Activated T-helper 1 cell treated with anti-CD3 and anti-CD28 coated beads, Interleukin-12 subunit alpha, Interleukin-12 subunit beta, Interleukin-2, Interleukin-4 antibody, amounts not matched to agents 30 ng/mL and 10 ng/mL and 1 ng/mL, durations not matched to agents 14 hours and 24 hours and 36 hours (primary cell): ENCODE measurements at regions of chr10 and their contacts with region 1.

Region 1: DNA sequence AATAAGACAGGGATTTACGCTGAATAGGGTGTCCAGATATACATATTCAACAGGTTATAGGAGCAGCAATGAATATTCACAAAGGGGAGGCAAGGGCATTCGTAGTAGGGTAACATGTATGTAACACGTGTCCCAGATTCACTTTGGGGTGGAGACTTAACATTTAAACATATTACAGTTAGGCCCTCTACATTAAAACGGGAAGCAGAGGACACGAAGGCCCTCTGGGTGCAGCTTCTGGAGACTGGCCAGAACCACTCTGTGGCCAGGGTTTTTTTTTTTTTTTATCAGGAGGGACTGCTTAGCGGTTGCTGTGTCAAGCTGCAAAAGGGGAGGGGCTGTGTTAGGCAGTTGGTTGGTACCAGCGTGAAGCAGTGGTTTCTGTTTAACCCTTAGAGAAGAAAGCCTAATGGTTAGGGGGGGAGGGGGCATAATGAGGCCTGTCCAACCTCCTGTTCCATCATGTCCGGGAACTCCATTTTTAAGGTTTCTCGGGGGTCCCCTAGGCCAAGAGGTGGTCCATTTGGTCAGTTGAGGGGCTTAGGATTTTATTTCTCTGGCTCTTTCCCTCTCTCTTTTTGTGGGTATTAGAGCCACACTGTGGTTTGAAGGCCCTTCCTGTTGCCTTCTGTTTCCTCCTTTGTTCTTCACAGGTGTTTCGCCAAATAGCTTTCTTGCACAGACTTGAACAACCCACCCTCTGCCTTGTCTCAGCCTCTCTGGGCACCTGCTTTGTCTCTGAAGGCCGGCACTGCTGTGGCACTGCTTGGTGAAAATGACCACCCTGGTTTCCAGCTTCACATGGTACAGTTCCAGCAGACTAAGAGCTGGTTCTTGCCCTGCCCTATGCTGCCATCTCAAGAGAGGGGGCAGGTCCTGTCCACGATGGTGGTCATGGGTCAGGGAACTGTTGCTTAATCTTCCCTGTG is 26.4 kb downstream of the PRF1 start:
- DNase-seq: no peak
- H3K4me3 Mint-ChIP-seq: no peak overlapping the region
- H3K27ac Mint-ChIP-seq: peak overlapping the region; percentile 76
- H3K4me1 Mint-ChIP-seq: peaks cover 49% of the 10 kb centered on the region
- H3K27me3 Mint-ChIP-seq: peaks cover 6% of the 10 kb centered on the region

Region 2: DNA sequence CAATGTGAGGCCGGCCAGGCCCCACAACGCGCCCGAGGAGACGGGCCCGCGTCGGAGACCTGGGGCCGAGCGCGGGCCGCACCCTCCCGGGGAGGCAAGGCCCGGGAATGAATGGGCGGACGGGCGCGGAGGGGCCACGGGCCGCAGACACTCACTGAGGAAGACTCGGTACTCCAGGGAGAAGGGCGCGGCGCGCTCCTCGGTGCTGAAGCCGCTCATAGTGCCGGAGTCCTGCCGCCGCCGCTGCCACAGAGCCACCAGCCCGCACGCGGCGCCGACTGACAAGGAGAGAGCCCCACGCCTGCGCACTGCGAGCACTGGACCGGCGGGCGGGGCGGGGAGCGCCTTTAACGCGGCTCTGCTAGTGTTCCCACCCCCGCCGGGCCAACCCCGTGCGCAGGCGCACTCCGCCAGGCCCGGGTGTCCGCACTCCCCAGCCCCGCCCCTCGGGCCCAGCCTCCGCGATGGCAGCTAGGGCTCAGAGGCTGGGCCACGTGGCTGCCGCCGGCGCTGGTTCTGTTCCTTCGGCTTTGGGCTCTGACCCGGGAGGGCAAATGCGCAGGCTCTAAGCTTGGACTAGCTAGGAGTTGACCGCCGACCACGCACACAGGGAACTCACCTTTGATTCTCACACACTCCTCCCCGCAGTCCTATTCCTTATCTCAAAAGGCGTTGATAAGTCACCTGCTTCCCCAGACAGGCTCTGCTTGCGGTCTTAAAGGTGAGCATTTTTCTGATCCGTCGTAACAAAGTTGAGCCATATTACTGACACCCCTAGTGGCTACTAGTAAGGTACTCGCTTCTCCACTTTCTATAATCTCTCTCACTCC is 342.8 kb before region 1 on chr10 and contains the start of gene PPA1:
- intact Hi-C with region 1: loop called (anchors 10 kb)
- DNase-seq: peak; percentile 100
- H3K4me3 Mint-ChIP-seq: peak within 1 kb of the TSS; percentile 86
- H3K27ac Mint-ChIP-seq: peak within 1 kb of the TSS; percentile 84
- H3K4me1 Mint-ChIP-seq: peaks cover 44% of the 10 kb centered on the region
- H3K27me3 Mint-ChIP-seq: no peaks in the 10 kb centered on the region
- total RNA-seq, gene PPA1: 374 and 393 TPM in 2 replicates

Region 3: DNA sequence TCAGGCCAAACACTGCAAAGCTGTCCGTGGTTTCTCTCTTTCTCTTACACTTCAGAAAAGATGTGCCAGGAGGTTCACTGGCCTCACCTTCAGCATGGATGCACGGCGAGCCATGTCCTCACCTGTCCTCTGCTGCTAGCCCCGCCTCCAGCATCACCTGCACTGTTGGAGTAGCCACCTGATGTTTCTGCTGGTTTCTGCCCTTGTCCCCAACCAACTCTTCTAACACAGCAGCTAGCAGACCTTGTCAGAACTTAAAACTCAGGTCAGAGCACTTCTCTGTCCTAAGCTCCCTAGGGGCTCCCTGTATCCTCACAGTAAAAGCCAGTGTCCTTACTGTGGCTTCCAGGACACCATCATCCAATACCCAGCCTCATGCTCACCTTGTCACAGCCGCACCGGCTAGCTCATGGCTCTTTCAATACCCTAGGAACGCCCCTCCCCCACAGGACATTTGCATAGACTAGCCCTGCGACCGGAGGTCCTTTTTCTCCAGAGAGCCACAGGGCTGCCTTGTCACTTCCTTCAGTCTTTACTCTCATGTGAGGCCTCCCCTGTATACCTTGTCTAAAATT is 82.4 kb before region 1 on chr10:
- intact Hi-C with region 1: loop called (anchors 1 kb)
- DNase-seq: no peak
- H3K4me3 Mint-ChIP-seq: no peak overlapping the region
- H3K27ac Mint-ChIP-seq: no peak overlapping the region
- H3K4me1 Mint-ChIP-seq: peaks cover 17% of the 10 kb centered on the region
- H3K27me3 Mint-ChIP-seq: peaks cover 24% of the 10 kb centered on the region

Region 4: GRCh38 chr10:70587045-70587658 is 11.0 kb after region 1 on chr10:
- intact Hi-C with region 1: loop called (anchors 1 kb)
- DNase-seq: no peak
- H3K4me3 Mint-ChIP-seq: no peak overlapping the region
- H3K27ac Mint-ChIP-seq: peak overlapping the region; percentile 92
- H3K4me1 Mint-ChIP-seq: peaks cover 26% of the 10 kb centered on the region
- H3K27me3 Mint-ChIP-seq: peaks cover 11% of the 10 kb centered on the region

Region 5: GRCh38 chr10:70602665-70603448 is 26.7 kb after region 1 on chr10 and contains the start of gene PRF1:
- intact Hi-C with region 1: loop called (anchors 1 kb)
- DNase-seq: peak; percentile 66
- H3K4me3 Mint-ChIP-seq: peak within 1 kb of the TSS; percentile 95
- H3K27ac Mint-ChIP-seq: peak within 1 kb of the TSS; percentile 97
- H3K4me1 Mint-ChIP-seq: peaks cover 32% of the 10 kb centered on the region
- H3K27me3 Mint-ChIP-seq: no peaks in the 10 kb centered on the region
- total RNA-seq, gene PRF1: 100 and 103 TPM in 2 replicates

Region 6: DNA sequence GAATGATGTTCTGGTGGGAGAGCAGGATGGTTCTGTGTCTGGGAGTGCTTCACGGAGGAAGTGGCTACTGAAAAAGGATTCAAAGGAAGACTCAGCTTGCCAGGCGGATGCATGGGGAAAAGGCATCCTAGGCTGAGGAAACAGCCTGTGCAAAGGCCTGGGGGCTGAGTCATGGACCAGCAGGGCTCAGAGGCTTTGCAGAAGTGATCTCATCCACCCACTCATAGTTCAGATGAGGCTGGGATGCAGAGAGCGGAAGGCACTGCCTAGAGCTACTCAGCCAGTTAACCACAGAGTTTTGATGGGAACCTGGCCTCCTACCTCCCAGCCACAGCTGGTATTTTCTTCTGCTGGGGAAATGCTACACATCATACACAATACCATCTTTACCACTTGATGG is 80.4 kb after region 1 on chr10:
- intact Hi-C with region 1: loop called (anchors 1 kb)
- DNase-seq: peak; percentile 42
- H3K4me3 Mint-ChIP-seq: peak overlapping the region; percentile 25
- H3K27ac Mint-ChIP-seq: peak overlapping the region; percentile 51
- H3K4me1 Mint-ChIP-seq: peaks cover 26% of the 10 kb centered on the region
- H3K27me3 Mint-ChIP-seq: peaks cover 8% of the 10 kb centered on the region

Region 7: GRCh38 chr10:72097448-72098300 is 1521.5 kb after region 1 on chr10:
- intact Hi-C with region 1: loop called (anchors 2 kb)
- DNase-seq: no peak
- H3K4me3 Mint-ChIP-seq: no peak overlapping the region
- H3K27ac Mint-ChIP-seq: peak overlapping the region; percentile 36
- H3K4me1 Mint-ChIP-seq: peaks cover 61% of the 10 kb centered on the region
- H3K27me3 Mint-ChIP-seq: no peaks in the 10 kb centered on the region